Tibial artery (tissue), 4 donors: ENCODE measurements at regions of chr5 and their contacts with region 1.

Region 1: GRCh38 chr5:32489791-32490582 is 45.4 kb upstream of the ZFR start:
- DNase-seq: peak; percentile 75 to 81
- H3K4me3 ChIP-seq: no peak overlapping the region
- H3K27ac ChIP-seq: no peak overlapping the region
- H3K4me1 ChIP-seq: peaks cover 0 to 6% (median 2%) of the 10 kb centered on the region in 4 donors
- H3K27me3 ChIP-seq: no peaks in the 10 kb centered on the region
- CTCF ChIP-seq: peak; percentile 77 to 81

Region 2: GRCh38 chr5:33423018-33423630 is 933.1 kb after region 1 on chr5:
- intact Hi-C with region 1: loop called (anchors 5 kb)
- DNase-seq: no peak
- H3K4me3 ChIP-seq: no peak overlapping the region
- H3K27ac ChIP-seq: no peak overlapping the region
- H3K4me1 ChIP-seq: no peaks in the 10 kb centered on the region
- H3K27me3 ChIP-seq: no peaks in the 10 kb centered on the region
- CTCF ChIP-seq: peak; percentile 48 to 50